ENCODE measurements at regions of chr11 and their contacts with region 1.

Region 1: GRCh38 chr11:127843483-127844396 is 743.6 kb downstream of the ETS1 start:
- DNase-seq: peak; percentile 85
- ATAC-seq: peak; percentile 55
- H3K4me3 Mint-ChIP-seq: no peak overlapping the region
- H3K27ac Mint-ChIP-seq: no peak overlapping the region
- H3K4me1 Mint-ChIP-seq: no peaks in the 10 kb centered on the region
- H3K27me3 Mint-ChIP-seq: peaks cover 8% of the 10 kb centered on the region
- CTCF ChIP-seq: peak; percentile 85

Region 2: DNA sequence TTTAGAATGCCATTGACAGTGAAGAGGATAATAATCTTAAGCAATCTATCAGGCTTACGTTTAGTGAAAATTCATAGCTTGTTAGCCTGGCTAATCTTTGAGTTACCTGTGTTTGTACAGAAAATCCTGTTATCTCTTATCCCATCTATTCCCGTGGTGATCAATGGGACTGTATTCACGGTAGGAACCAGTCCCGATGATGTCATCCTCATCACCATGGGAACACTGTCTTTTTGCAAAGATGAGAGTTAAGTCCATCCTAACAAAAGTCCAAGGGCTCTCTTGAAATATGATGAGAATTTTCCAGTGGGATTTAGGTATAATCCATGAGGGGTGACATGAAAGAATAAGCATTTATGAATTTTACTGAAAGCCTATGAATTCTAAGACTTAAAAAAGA is 18.6 kb before region 1 on chr11:
- CTCF ChIA-PET with region 1: interaction called, 13 read pairs
- POLR2A ChIA-PET with region 1: no interaction called
- intact Hi-C with region 1: no loop called
- DNase-seq: no peak
- ATAC-seq: no peak
- H3K4me3 Mint-ChIP-seq: no peak overlapping the region
- H3K27ac Mint-ChIP-seq: no peak overlapping the region
- H3K4me1 Mint-ChIP-seq: no peaks in the 10 kb centered on the region
- H3K27me3 Mint-ChIP-seq: peaks cover 16% of the 10 kb centered on the region
- CTCF ChIP-seq: no peak

Region 3: GRCh38 chr11:127859941-127860354 is 16.2 kb after region 1 on chr11:
- CTCF ChIA-PET with region 1: interaction called, 11 read pairs
- POLR2A ChIA-PET with region 1: no interaction called
- intact Hi-C with region 1: no loop called
- DNase-seq: no peak
- ATAC-seq: no peak
- H3K4me3 Mint-ChIP-seq: no peak overlapping the region
- H3K27ac Mint-ChIP-seq: no peak overlapping the region
- H3K4me1 Mint-ChIP-seq: no peaks in the 10 kb centered on the region
- H3K27me3 Mint-ChIP-seq: peaks cover 7% of the 10 kb centered on the region
- CTCF ChIP-seq: no peak

Measured in activated CD8-positive, alpha-beta T cell treated with anti-CD3 and anti-CD28 coated beads for 36 hours (primary cell).